Left lung (tissue), 14 donors: ENCODE measurements at regions of chr15 and their contacts with region 1.

Region 1: DNA sequence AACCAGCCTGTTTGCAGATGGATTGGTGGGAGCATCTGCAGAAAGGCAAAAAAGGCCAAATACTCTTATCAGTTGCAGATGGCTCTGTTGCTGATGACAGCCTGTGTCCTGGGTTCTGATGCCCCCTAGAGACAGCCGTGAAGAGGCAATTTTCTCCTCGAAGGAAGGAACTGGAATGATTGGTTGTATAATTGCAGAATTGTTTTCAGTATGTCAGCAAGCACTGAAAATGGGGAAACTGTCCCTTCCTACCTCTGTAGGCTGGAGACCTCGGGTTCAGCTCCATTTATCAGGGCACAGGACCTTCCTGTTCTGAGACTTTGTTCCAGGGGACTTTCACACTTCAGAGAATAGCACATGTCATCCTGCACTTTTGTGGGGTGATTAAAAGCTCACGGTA is 103.0 kb downstream of the PGPEP1L start:
- DNase-seq: peak in 1 of 4 donors; percentile 52
- ATAC-seq: peak; percentile 61
- H3K4me3 ChIP-seq: no peak overlapping the region
- H3K27ac ChIP-seq: peak overlapping the region in 1 of 2 donors; percentile 18
- H3K4me1 ChIP-seq: peaks cover 8 to 58% of the 10 kb centered on the region in 2 donors
- H3K27me3 ChIP-seq: no peaks in the 10 kb centered on the region
- CTCF ChIP-seq: peak; percentile 12 to 21

Region 2: DNA sequence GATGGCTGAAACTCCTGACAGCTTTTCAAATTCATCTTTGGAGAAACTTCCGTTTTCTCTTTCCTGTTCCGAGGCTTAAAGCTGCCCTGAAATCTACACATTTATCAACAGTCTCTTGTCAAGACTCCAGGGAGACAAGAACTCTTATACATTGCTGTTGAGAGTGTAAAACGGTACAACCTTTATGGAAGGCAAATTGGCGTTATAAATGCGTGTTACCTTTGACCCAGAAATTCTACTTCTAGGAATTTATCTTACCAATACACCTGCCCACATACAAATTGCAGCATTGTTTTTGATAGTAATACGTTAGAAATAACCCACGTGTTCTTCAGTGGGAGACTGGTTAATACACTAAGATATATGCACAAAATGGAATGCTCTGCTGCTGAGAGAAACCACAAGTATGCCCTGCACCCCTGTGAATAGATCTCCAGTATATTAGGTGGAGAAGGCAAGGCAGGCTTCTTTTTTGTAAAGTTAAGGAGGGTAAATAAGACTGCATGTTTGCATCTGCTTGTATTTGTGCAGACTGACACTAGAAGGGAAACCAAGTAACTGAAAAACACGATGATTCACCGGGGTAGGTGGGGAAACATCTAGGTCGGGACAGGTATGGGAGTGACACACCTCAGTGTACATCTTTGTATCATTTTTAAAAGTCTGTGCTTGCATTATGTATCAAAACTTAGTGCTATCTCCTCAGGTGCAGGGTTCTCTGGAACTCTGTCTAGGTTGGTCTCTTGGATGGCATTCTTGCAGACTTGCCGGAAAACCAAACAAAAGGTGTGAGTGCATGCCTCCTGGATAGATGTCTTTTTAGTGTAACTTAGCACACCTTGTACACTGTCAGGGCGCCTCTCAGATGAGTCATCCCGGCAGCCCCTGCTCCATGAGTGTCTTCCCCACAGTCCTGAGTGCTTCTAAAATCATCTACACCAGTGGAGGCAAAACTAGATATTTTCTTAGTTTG is 158.6 kb before region 1 on chr15:
- intact Hi-C with region 1: no loop called
- DNase-seq: no peak
- ATAC-seq: peak; percentile 50
- H3K4me3 ChIP-seq: no peak overlapping the region
- H3K27ac ChIP-seq: peak overlapping the region in 1 of 2 donors; percentile 7
- H3K4me1 ChIP-seq: peaks cover 3 to 24% of the 10 kb centered on the region in 2 donors
- H3K27me3 ChIP-seq: no peaks in the 10 kb centered on the region
- CTCF ChIP-seq: no peak

Region 3: DNA sequence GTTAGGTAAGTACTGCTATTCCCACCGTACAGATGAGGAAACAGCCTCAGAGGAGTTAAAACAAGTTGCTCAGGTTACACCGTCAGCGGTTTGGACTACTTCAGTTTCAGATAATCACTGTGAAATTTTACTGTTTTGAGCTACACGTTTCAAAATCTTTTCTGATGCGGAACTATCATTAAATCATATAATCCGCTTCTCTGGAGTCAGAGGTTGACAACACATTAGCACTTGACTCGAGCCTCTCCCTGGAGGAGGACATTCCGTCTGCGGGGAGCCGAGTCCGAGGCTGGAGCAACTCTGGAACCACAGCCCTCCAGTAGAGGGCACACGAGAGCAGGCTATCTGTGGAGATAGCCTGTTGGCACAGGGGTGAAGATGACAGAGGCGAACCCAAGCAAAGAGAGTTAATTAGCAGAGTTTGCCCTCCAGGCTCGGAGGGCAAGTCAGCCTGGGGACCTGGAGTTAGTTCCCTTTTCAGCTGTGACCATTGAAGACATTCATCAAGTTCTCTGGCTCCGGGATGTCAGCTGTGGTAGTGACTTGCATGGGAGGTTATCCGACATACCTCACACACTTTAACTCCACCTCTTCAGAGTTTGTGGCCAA is 125.0 kb before region 1 on chr15:
- intact Hi-C with region 1: loop called in 1 of 2 experiments (anchors 10 kb)
- DNase-seq: peak in 3 of 4 donors; percentile 78 to 89 (median 79)
- ATAC-seq: peak; percentile 90
- H3K4me3 ChIP-seq: no peak overlapping the region
- H3K27ac ChIP-seq: no peak overlapping the region
- H3K4me1 ChIP-seq: peaks cover 10 to 44% of the 10 kb centered on the region in 2 donors
- H3K27me3 ChIP-seq: no peaks in the 10 kb centered on the region
- CTCF ChIP-seq: peak; percentile 86 to 92